ENCODE measurements at regions of chr12 and their contacts with region 1.

Region 1: DNA sequence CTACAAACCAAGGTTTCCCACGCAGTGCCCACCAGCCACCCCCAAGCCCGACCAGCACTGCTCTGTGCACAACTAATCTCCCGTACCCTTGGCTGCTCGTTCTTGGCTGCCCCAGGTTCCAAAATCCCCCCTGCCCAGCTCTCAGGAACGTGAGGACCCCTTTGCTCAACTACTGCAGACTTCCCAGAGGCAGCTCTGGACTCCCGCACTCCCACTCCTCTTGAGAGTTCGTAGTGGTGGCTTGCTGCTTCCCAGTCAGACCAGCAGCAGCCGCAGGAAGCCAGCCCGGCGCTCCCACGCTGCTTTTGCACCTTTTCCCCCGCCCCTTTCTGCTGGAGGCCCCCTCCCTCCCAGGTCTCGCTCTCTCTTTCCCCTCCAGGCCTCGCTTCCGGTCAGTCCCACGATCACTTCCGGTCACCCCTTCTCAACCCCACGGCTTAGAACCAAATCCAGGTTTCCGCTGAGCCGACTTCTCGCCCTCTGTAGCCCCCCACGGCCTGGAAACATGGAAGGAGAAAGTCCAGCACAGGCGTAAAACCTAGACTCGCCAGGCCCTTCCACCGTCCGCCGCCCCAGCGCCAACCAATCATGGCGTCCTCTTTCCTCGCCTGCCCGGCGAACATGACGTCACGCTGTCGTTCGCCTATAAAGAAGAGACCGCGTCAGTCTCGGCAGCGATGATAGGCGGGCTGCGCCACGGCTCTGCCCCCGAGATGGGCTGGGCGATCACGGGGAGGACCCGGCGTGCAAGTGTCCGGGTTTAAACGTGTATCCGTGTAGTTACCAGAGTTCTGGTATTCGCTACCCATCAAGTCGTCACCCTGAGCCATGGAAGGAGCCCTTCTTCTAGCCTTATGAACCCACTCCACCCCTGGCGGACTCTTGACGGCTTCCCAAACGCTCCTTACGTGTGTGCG is at the start of gene TFCP2:
- DNase-seq: peak; percentile 97
- ATAC-seq: peak; percentile 99
- H3K4me3 ChIP-seq: peak within 1 kb of the TSS; percentile 75 to 100 (median 88)
- H3K4me3 Mint-ChIP-seq: peak within 1 kb of the TSS; percentile 83
- H3K27ac ChIP-seq: peak within 1 kb of the TSS; percentile 85 to 96
- H3K27ac Mint-ChIP-seq: peak within 1 kb of the TSS; percentile 77
- H3K4me1 ChIP-seq: peaks cover 16 to 19% of the 10 kb centered on the region in 2 donors
- H3K4me1 Mint-ChIP-seq: peaks cover 15% of the 10 kb centered on the region
- H3K27me3 ChIP-seq: no peaks in the 10 kb centered on the region
- H3K27me3 Mint-ChIP-seq: no peaks in the 10 kb centered on the region
- CTCF ChIP-seq: no peak
- total RNA-seq, gene TFCP2: 37.0 and 38.8 TPM in 2 replicates

Region 2: DNA sequence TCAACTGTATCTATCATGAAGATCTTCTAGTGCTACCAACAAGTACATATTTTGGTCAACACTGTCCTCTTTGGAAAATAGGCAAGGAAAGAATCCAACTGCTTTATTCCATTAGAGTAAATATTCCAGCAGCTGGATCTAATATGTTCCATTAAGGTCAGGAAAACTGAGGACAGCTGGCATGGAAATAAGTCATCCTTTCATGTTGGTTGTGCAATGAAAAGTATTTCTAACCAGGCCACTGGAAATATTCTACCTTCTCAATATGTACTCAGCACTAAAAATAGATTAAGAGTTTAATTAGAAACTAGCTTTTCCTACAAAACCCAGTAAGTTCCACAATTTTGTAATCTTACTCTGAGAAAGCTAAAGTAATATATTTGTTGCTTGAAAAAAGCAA is 200.8 kb before region 1 on chr12:
- CTCF ChIA-PET with region 1: no interaction called
- POLR2A ChIA-PET with region 1: no interaction called
- intact Hi-C with region 1: no loop called
- DNase-seq: no peak
- ATAC-seq: no peak
- H3K4me3 ChIP-seq: no peak overlapping the region
- H3K4me3 Mint-ChIP-seq: no peak overlapping the region
- H3K27ac ChIP-seq: no peak overlapping the region
- H3K27ac Mint-ChIP-seq: no peak overlapping the region
- H3K4me1 ChIP-seq: no peaks in the 10 kb centered on the region
- H3K4me1 Mint-ChIP-seq: no peaks in the 10 kb centered on the region
- H3K27me3 ChIP-seq: no peaks in the 10 kb centered on the region
- H3K27me3 Mint-ChIP-seq: no peaks in the 10 kb centered on the region
- CTCF ChIP-seq: no peak

Region 3: DNA sequence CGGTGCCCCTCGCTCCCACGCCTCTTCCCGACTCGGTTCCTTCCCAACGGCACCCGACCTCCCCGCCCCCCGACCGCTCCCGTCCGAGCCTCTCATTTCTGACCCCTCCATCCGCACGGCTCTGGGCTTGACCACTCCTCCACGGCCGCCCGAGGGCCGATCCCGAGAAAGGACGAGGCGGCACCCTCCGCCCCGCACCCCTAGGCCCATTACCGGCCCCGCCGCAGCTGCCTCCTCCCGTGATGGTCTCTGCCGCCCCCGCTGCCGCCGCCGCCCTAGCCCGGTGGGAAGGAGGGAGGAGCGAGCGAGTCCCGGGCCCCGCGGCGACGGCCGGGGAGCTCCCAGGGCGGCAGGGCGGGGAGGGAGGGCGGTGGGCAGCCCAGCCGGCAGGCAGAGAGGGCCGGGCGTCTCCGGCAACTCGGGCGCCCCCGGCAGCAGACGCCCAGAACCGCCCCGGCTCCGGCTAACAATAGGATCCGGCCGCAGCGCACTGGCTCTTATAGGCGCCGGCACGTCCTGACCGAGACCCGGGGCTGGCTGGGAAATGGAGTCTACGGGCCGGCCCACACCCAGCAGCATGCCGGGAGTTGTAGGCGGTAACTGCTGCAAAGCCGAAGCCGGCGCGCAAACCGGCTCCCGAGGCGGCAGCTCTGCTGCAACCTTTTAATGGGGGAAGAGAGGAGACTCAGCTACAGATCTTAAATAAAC is 89.5 kb before region 1 on chr12 and contains the start of gene CSRNP2:
- CTCF ChIA-PET with region 1: no interaction called
- POLR2A ChIA-PET with region 1: no interaction called
- intact Hi-C with region 1: loop called (anchors 1 kb)
- DNase-seq: peak; percentile 96
- ATAC-seq: peak; percentile 99
- H3K4me3 ChIP-seq: peak within 1 kb of the TSS; percentile 54 to 87 (median 77)
- H3K4me3 Mint-ChIP-seq: peak within 1 kb of the TSS; percentile 96
- H3K27ac ChIP-seq: peak within 1 kb of the TSS; percentile 11 to 88
- H3K27ac Mint-ChIP-seq: peak within 1 kb of the TSS; percentile 88
- H3K4me1 ChIP-seq: peaks cover 9 to 17% of the 10 kb centered on the region in 2 donors
- H3K4me1 Mint-ChIP-seq: peaks cover 25% of the 10 kb centered on the region
- H3K27me3 ChIP-seq: no peaks in the 10 kb centered on the region
- H3K27me3 Mint-ChIP-seq: no peaks in the 10 kb centered on the region
- CTCF ChIP-seq: peak; percentile 20
- total RNA-seq, gene CSRNP2: 49.8 and 52.3 TPM in 2 replicates

Region 4: DNA sequence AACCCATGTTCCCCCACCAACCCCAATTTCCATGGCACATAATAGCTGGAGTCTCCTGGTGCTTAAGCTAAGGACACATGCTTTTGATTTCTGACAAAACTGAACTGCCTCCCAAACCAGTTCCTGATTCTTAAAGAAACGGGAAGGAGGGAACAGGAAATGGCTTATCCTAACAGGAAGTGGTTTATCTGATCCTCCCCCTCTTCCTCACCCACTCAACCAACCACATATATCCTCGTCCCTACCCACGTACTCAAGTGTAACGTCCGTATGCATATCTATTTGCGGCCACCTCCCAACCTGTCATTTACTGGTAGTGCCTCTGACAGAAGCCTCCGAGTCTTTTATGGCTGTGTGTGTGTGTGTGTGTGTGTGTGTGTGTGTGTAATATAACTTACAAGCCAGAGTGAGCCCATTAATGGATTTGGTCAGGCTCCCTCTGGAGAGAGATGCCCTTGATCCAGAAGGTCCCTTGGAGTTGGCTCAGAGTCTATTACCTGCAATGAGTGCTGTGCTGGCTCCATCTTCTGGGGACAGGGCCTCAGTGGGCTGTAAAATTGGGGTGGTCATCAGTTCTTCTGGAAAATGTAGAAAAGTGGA is 73.6 kb after region 1 on chr12:
- CTCF ChIA-PET with region 1: no interaction called
- POLR2A ChIA-PET with region 1: no interaction called
- intact Hi-C with region 1: no loop called
- DNase-seq: peak; percentile 53
- ATAC-seq: peak; percentile 24
- H3K4me3 ChIP-seq: no peak overlapping the region
- H3K4me3 Mint-ChIP-seq: peak overlapping the region; percentile 49
- H3K27ac ChIP-seq: peak overlapping the region; percentile 63 to 78
- H3K27ac Mint-ChIP-seq: peak overlapping the region; percentile 91
- H3K4me1 ChIP-seq: peaks cover 26 to 35% of the 10 kb centered on the region in 2 donors
- H3K4me1 Mint-ChIP-seq: peaks cover 49% of the 10 kb centered on the region
- H3K27me3 ChIP-seq: no peaks in the 10 kb centered on the region
- H3K27me3 Mint-ChIP-seq: no peaks in the 10 kb centered on the region
- CTCF ChIP-seq: no peak